ENCODE measurements at regions of chr3 and their contacts with region 1.

Region 1: DNA sequence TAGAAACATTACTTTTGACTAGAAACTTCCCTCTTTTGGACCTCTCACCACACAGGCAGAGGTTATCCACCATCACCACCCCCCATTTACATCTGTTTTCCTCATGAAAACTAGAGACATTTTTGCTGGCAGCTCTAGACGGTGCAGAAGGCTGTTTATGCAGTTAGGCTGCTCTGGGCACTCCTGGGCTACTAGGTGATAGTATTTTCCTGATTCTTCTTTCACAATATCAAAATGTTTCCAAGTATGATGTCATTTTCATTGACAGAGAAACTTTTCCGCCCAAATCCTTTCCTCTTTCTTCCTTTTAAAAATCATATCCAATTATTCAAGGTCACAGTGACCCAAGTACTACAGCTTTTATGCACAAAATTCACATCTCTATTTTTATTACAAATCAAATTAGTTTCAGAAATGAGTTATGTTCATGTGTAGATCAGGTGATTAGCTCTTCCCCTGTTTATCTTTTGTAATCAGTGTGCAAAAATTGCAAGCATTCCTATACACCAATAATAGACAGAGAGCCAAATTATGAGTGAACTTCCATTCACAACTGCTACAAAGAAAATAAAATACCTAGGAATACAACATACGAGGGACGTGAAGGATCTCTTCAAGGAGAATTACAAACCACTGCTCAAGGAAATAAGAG is 66.9 kb downstream of the PLOD2 start:
- DNase-seq: no peak
- ATAC-seq: no peak
- H3K4me3 ChIP-seq: no peak overlapping the region
- H3K27ac ChIP-seq: no peak overlapping the region
- H3K4me1 ChIP-seq: 0 out of 2 replicates have a peak, but pooled peaks cover 4% of the 10 kb centered on the region
- H3K27me3 ChIP-seq: no peaks in the 10 kb centered on the region
- CTCF ChIP-seq: no peak

Region 2: GRCh38 chr3:146078031-146078430 is 16.0 kb before region 1 on chr3:
- CTCF ChIA-PET with region 1: no interaction called
- POLR2A ChIA-PET with region 1: no interaction called
- intact Hi-C with region 1: loop called (anchors 2 kb)
- DNase-seq: peak; percentile 66
- ATAC-seq: peak; percentile 71
- H3K4me3 ChIP-seq: no peak overlapping the region
- H3K27ac ChIP-seq: peak overlapping the region; percentile 71
- H3K4me1 ChIP-seq: peaks cover 30% of the 10 kb centered on the region
- H3K27me3 ChIP-seq: no peaks in the 10 kb centered on the region
- CTCF ChIP-seq: no peak

Region 3: DNA sequence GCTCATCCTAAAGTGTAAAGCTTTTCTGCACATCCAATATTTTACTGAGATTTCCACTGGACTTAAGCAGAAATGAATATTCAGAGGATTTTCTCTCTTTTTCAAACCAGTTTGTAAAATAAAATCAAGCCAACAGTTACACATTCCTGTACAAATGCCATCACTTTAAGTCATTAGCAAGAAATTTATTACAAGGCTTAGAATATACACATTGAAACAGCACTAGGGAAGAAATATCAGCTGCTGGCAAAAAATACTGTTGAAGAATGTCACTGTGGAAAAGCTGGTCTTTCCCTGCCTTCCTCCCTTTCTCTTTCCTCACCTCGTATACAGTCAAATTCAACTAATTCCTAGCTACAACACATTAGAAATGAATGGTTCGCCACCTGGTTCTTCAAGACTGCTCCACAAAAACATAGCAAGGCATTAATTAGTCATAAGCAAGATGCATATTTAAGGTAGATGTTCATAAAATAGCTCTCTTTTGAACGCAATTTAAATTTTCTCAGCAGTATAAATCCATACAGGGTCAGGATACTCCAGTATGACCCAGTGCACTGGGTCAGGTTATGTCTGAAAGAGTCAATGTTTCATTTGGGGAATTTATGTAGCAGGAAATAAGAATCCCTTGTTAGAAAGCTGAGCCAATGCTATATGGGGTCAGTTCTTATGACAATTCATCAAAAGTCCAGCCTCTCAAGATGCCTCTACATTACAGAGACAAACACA is 45.7 kb after region 1 on chr3:
- CTCF ChIA-PET with region 1: no interaction called
- POLR2A ChIA-PET with region 1: no interaction called
- intact Hi-C with region 1: no loop called
- DNase-seq: no peak
- ATAC-seq: no peak
- H3K4me3 ChIP-seq: no peak overlapping the region
- H3K27ac ChIP-seq: no peak overlapping the region
- H3K4me1 ChIP-seq: peaks cover 17% of the 10 kb centered on the region
- H3K27me3 ChIP-seq: no peaks in the 10 kb centered on the region
- CTCF ChIP-seq: no peak